CD8-positive, alpha-beta T cell (primary cell): ENCODE measurements at regions of chrX and their contacts with region 1.

Region 1: GRCh38 chrX:17944833-17945497 is 83.9 kb upstream of the RAI2 start:
- DNase-seq: peak in 4 of 9 experiments; percentile 10 to 48 (median 16)
- ATAC-seq: no peak
- H3K4me3 ChIP-seq: no peak overlapping the region
- H3K4me3 Mint-ChIP-seq: no peak overlapping the region
- H3K27ac ChIP-seq: no peak overlapping the region
- H3K27ac Mint-ChIP-seq: no peak overlapping the region
- H3K4me1 ChIP-seq: no peaks in the 10 kb centered on the region
- H3K4me1 Mint-ChIP-seq: no peaks in the 10 kb centered on the region
- H3K27me3 ChIP-seq: no peaks in the 10 kb centered on the region
- H3K27me3 Mint-ChIP-seq: no peaks in the 10 kb centered on the region
- CTCF ChIP-seq: peak; percentile 36

Region 2: DNA sequence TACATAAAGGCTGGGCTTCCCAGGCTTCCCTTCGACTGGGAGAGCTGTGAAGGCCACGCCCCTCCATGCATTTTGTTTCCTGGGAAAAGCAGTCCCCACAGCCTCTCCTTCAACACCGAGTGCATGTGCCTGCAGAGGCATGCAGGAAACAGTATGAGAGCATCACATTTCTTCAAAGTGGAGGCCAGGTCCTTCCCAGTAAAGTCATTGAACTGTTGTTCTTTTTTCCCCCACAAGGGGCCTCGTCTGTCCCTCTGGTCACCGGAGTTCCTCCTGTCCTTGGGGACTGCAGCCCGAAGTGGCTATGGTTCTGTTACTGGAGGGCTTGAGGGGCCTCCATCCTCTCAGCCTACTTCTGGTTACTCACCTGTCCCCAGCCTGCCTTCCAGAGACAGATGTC is 139.8 kb before region 1 on chrX:
- CTCF ChIA-PET with region 1: no interaction called
- POLR2A ChIA-PET with region 1: no interaction called
- intact Hi-C with region 1: no loop called
- DNase-seq: no peak
- ATAC-seq: no peak
- H3K4me3 ChIP-seq: no peak overlapping the region
- H3K4me3 Mint-ChIP-seq: no peak overlapping the region
- H3K27ac ChIP-seq: no peak overlapping the region
- H3K27ac Mint-ChIP-seq: no peak overlapping the region
- H3K4me1 ChIP-seq: no peaks in the 10 kb centered on the region
- H3K4me1 Mint-ChIP-seq: no peaks in the 10 kb centered on the region
- H3K27me3 ChIP-seq: no peaks in the 10 kb centered on the region
- H3K27me3 Mint-ChIP-seq: no peaks in the 10 kb centered on the region
- CTCF ChIP-seq: no peak

Region 3: GRCh38 chrX:18119857-18120256 is 174.9 kb after region 1 on chrX:
- CTCF ChIA-PET with region 1: interaction called, 4 read pairs
- POLR2A ChIA-PET with region 1: no interaction called
- intact Hi-C with region 1: loop called in 1 of 2 experiments (anchors 10 kb)
- DNase-seq: peak in 2 of 9 experiments; percentile 10 to 21
- ATAC-seq: no peak
- H3K4me3 ChIP-seq: no peak overlapping the region
- H3K4me3 Mint-ChIP-seq: no peak overlapping the region
- H3K27ac ChIP-seq: no peak overlapping the region
- H3K27ac Mint-ChIP-seq: no peak overlapping the region
- H3K4me1 ChIP-seq: no peaks in the 10 kb centered on the region
- H3K4me1 Mint-ChIP-seq: no peaks in the 10 kb centered on the region
- H3K27me3 ChIP-seq: no peaks in the 10 kb centered on the region
- H3K27me3 Mint-ChIP-seq: peaks cover 4% of the 10 kb centered on the region
- CTCF ChIP-seq: no peak

Region 4: GRCh38 chrX:18210470-18210869 is 265.5 kb after region 1 on chrX:
- CTCF ChIA-PET with region 1: no interaction called
- POLR2A ChIA-PET with region 1: no interaction called
- intact Hi-C with region 1: loop called in 1 of 2 experiments (anchors 5 kb)
- DNase-seq: peak in 1 of 9 experiments; percentile 7
- ATAC-seq: no peak
- H3K4me3 ChIP-seq: no peak overlapping the region
- H3K4me3 Mint-ChIP-seq: no peak overlapping the region
- H3K27ac ChIP-seq: no peak overlapping the region
- H3K27ac Mint-ChIP-seq: no peak overlapping the region
- H3K4me1 ChIP-seq: no peaks in the 10 kb centered on the region
- H3K4me1 Mint-ChIP-seq: no peaks in the 10 kb centered on the region
- H3K27me3 ChIP-seq: no peaks in the 10 kb centered on the region
- H3K27me3 Mint-ChIP-seq: peaks cover 2% of the 10 kb centered on the region
- CTCF ChIP-seq: no peak

Region 5: DNA sequence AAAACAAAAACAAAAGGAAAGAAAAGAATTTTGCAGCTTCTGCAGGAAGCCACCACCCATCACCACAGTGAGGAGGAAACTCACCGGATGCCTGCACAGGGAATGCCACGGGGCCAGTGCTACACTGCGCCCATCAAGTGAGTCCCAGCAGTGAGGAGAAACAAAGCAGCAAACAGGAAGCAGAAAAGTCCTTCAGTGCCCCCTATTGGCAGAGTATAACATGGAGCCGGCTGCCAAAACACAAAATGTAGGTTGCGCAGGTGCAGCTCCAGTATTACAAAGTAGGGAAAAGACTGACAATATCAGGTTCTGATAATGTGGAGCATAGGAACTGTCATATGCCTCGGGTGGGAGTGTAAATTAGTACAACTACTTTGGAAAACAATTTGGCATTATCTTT is 432.8 kb after region 1 on chrX:
- CTCF ChIA-PET with region 1: interaction called, 4 read pairs
- POLR2A ChIA-PET with region 1: no interaction called
- intact Hi-C with region 1: loop called (anchors 2 to 10 kb)
- DNase-seq: peak in 4 of 9 experiments; percentile 11 to 53 (median 26)
- ATAC-seq: peak; percentile 49
- H3K4me3 ChIP-seq: no peak overlapping the region
- H3K4me3 Mint-ChIP-seq: no peak overlapping the region
- H3K27ac ChIP-seq: no peak overlapping the region
- H3K27ac Mint-ChIP-seq: no peak overlapping the region
- H3K4me1 ChIP-seq: no peaks in the 10 kb centered on the region
- H3K4me1 Mint-ChIP-seq: peaks cover 5% of the 10 kb centered on the region
- H3K27me3 ChIP-seq: no peaks in the 10 kb centered on the region
- H3K27me3 Mint-ChIP-seq: no peaks in the 10 kb centered on the region
- CTCF ChIP-seq: peak; percentile 29